MCF 10A (cell line): ENCODE measurements at regions of chr1 and their contacts with region 1.

Region 1: GRCh38 chr1:235105051-235106043 is 23.3 kb downstream of the TOMM20 start:
- DNase-seq: peak; percentile 51
- H3K4me3 Mint-ChIP-seq: peak overlapping the region; percentile 59
- H3K27ac Mint-ChIP-seq: peak overlapping the region; percentile 33
- H3K4me1 Mint-ChIP-seq: peaks cover 29% of the 10 kb centered on the region
- H3K27me3 Mint-ChIP-seq: no peaks in the 10 kb centered on the region
- CTCF ChIP-seq: no peak

Region 2: DNA sequence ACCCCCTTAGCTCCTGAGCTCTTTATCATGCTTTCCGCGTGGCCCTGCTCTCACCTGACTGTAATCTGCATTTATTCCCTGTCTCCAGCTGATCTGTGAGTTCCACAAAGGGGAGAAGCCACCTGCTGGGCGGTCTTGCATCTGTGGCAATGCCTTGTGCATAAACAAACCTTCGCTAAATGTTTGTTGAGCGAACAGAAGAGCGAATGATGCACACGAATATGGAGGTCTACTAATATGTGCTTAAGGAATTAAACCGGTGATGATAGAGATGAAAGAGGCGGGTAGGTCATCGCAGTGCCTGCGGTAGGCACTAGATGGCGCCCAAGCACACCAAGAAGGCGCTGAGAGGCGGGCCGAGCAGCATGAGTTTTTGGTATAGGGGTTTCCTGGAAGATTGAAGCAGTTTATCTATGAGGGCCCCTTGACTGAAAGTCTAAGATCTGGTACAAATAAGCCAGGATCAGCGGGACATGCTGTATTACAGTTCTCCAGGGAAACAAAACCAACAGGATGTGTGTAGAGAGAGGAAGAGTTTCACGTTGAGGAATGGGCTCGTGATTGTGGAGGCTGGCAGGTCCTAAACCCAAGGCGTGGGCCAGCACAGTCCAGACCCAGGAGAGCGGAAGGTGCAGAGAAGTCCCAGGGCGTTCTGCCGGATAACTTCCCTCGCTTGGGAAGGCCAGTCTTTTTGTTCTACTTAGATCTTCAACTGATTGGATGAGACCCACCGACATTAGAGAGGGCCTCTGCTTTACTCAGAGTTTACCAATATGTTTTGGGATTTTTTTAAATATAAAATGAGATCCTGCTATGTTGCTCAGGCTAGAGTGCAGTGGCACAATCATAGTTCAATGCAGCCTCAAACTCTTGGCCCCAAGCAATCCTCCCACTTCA is 11.4 kb before region 1 on chr1:
- CTCF ChIA-PET with region 1: interaction called, 108 read pairs
- POLR2A ChIA-PET with region 1: interaction called, 11 read pairs
- intact Hi-C with region 1: no loop called
- DNase-seq: peak; percentile 83
- H3K4me3 Mint-ChIP-seq: no peak overlapping the region
- H3K27ac Mint-ChIP-seq: no peak overlapping the region
- H3K4me1 Mint-ChIP-seq: peaks cover 6% of the 10 kb centered on the region
- H3K27me3 Mint-ChIP-seq: no peaks in the 10 kb centered on the region
- CTCF ChIP-seq: peak; percentile 100

Region 3: DNA sequence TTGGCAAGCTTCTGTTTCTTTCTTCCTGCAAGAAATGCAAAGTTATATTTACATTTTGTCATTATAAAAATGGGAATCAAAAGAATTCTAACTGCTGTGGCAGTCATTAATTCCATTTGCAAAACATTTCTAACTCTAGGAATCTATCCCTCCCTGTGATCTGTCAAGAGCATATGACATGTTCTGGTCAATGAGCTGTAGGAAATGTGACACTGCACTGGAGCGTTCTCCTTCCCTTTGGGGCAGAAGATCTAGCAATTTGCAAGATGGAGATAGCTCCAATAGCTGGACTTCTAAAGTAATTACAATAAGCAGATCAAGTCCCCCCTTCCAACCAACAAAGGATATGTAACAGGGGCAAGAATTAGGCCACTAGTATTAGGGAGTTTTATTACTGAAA is 17.0 kb after region 1 on chr1:
- CTCF ChIA-PET with region 1: interaction called, 26 read pairs
- POLR2A ChIA-PET with region 1: interaction called, 149 read pairs
- intact Hi-C with region 1: no loop called
- DNase-seq: no peak
- H3K4me3 Mint-ChIP-seq: no peak overlapping the region
- H3K27ac Mint-ChIP-seq: peak overlapping the region; percentile 56
- H3K4me1 Mint-ChIP-seq: peaks cover 45% of the 10 kb centered on the region
- H3K27me3 Mint-ChIP-seq: no peaks in the 10 kb centered on the region
- CTCF ChIP-seq: no peak

Region 4: DNA sequence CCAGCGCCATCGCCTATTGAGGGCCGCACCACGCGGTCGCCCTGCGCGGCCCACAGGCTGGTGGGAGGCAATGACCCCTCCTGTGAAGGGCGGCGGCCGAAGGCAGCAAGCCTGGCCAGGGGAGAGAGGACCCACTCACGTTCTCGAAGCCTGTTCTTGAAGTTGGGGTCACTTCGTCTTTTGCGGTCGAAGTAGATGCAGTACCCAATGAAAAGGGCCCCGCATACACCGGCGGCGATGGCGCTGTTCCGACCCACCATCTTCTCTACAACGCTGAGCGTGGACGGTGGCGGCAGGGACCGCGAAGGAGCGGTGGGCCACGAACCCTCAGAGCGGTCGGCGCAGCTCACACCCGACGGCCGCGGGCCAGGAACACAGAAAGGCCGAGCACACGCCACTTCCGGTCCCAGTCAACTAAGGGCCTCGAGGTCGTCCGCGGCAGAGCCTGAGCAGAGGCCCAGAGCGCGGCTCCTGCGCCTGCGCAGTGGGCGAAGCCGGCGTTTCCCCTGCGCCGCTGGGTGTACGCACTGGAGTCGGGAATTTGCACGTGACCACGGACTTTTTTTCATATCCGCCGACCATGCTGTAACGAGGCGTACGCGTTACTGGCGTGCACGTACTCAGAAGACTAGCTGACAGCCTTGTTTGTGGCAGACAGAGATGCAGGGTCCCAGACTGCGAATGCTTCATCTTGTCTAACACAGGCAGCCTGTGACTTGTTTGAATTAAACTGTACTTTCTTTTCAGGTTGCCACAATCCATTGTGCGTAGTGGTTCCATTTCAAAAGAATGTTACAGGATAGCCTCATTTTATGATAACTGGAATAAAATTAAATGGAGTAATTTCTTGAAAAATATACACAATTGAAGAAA is 23.3 kb after region 1 on chr1 and contains the start of gene TOMM20:
- CTCF ChIA-PET with region 1: interaction called, 26 read pairs
- POLR2A ChIA-PET with region 1: interaction called, 149 read pairs
- intact Hi-C with region 1: no loop called
- DNase-seq: peak; percentile 100
- H3K4me3 Mint-ChIP-seq: peak within 1 kb of the TSS; percentile 100
- H3K27ac Mint-ChIP-seq: peak within 1 kb of the TSS; percentile 99
- H3K4me1 Mint-ChIP-seq: peaks cover 23% of the 10 kb centered on the region
- H3K27me3 Mint-ChIP-seq: no peaks in the 10 kb centered on the region
- CTCF ChIP-seq: no peak
- total RNA-seq, gene TOMM20: 309 and 339 TPM in 2 replicates